ENCODE measurements at regions of chr1 and their contacts with region 1.

Region 1: GRCh38 chr1:111481387-111482221 is 7.8 kb downstream of the C1orf162 start:
- DNase-seq: peak; percentile 65
- H3K4me3 ChIP-seq: no peak overlapping the region
- H3K27ac ChIP-seq: no peak overlapping the region
- H3K4me1 ChIP-seq: peaks cover 21% of the 10 kb centered on the region
- CTCF ChIP-seq: peak; percentile 78

Region 2: GRCh38 chr1:111471012-111471411 is 10.6 kb before region 1 on chr1:
- CTCF ChIA-PET with region 1: interaction called, 3 read pairs
- POLR2A ChIA-PET with region 1: interaction called, 10 read pairs
- intact Hi-C with region 1: no loop called
- DNase-seq: peak; percentile 78
- H3K4me3 ChIP-seq: peak overlapping the region; percentile 38
- H3K27ac ChIP-seq: peak overlapping the region; percentile 66
- H3K4me1 ChIP-seq: peaks cover 26% of the 10 kb centered on the region
- CTCF ChIP-seq: no peak

Region 3: DNA sequence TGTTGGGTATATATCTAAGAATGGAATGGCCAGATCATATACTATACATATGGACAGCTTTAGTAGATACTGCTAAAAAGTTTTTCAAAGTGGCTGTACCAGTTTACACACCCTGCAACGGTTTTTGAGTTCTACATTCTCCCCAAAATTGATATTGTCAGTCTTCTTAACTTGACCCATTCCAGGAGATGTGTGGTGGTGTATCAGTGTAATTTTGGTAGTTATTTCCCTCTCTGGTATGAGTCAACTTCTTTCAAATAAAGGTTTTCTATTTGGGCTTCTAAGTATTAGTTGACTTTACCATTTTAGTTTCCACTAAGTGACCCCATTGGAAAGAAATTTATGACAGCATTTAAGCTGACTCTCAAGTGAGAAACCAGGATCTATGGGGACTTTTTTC is 228.4 kb after region 1 on chr1:
- CTCF ChIA-PET with region 1: no interaction called
- POLR2A ChIA-PET with region 1: no interaction called
- intact Hi-C with region 1: loop called (anchors 5 kb)
- DNase-seq: no peak
- H3K4me3 ChIP-seq: no peak overlapping the region
- H3K27ac ChIP-seq: no peak overlapping the region
- H3K4me1 ChIP-seq: no peaks in the 10 kb centered on the region
- CTCF ChIP-seq: no peak

Region 4: GRCh38 chr1:111769517-111770146 is 288.0 kb after region 1 on chr1:
- CTCF ChIA-PET with region 1: interaction called, 3 read pairs
- POLR2A ChIA-PET with region 1: interaction called, 6 read pairs
- intact Hi-C with region 1: loop called (anchors 1 kb)
- DNase-seq: peak; percentile 80
- H3K4me3 ChIP-seq: no peak overlapping the region
- H3K27ac ChIP-seq: no peak overlapping the region
- H3K4me1 ChIP-seq: no peaks in the 10 kb centered on the region
- CTCF ChIP-seq: peak; percentile 97